CD4-positive, alpha-beta T cell (primary cell): ENCODE measurements at regions of chr7 and their contacts with region 1.

Region 1: GRCh38 chr7:102279537-102280400 is 6.9 kb upstream of the SH2B2 start:
- DNase-seq: peak in 13 of 14 experiments; percentile 37 to 82 (median 51)
- ATAC-seq: peak; percentile 89
- H3K4me3 ChIP-seq: no peak overlapping the region
- H3K4me3 Mint-ChIP-seq: no peak overlapping the region
- H3K27ac ChIP-seq: no peak overlapping the region
- H3K27ac Mint-ChIP-seq: no peak overlapping the region
- H3K4me1 ChIP-seq: peaks cover 14% of the 10 kb centered on the region
- H3K4me1 Mint-ChIP-seq: peaks cover 6% of the 10 kb centered on the region
- H3K27me3 ChIP-seq: no peaks in the 10 kb centered on the region
- H3K27me3 Mint-ChIP-seq: no peaks in the 10 kb centered on the region
- CTCF ChIP-seq: peak; percentile 81

Region 2: GRCh38 chr7:102306875-102307677 is 27.3 kb after region 1 on chr7:
- CTCF ChIA-PET with region 1: no interaction called
- POLR2A ChIA-PET with region 1: no interaction called
- intact Hi-C with region 1: no loop called
- DNase-seq: peak in 4 of 14 experiments; percentile 18 to 64 (median 54)
- ATAC-seq: peak; percentile 44
- H3K4me3 ChIP-seq: peak overlapping the region; percentile 4
- H3K4me3 Mint-ChIP-seq: no peak overlapping the region
- H3K27ac ChIP-seq: no peak overlapping the region
- H3K27ac Mint-ChIP-seq: no peak overlapping the region
- H3K4me1 ChIP-seq: peaks cover 27% of the 10 kb centered on the region
- H3K4me1 Mint-ChIP-seq: no peaks in the 10 kb centered on the region
- H3K27me3 ChIP-seq: no peaks in the 10 kb centered on the region
- H3K27me3 Mint-ChIP-seq: no peaks in the 10 kb centered on the region
- CTCF ChIP-seq: no peak

Region 3: GRCh38 chr7:102456327-102456726 is 176.6 kb after region 1 on chr7:
- CTCF ChIA-PET with region 1: no interaction called
- POLR2A ChIA-PET with region 1: no interaction called
- intact Hi-C with region 1: loop called in 1 of 2 experiments (anchors 5 kb)
- DNase-seq: no peak
- ATAC-seq: no peak
- H3K4me3 ChIP-seq: no peak overlapping the region
- H3K4me3 Mint-ChIP-seq: no peak overlapping the region
- H3K27ac ChIP-seq: no peak overlapping the region
- H3K27ac Mint-ChIP-seq: no peak overlapping the region
- H3K4me1 ChIP-seq: peaks cover 3% of the 10 kb centered on the region
- H3K4me1 Mint-ChIP-seq: no peaks in the 10 kb centered on the region
- H3K27me3 ChIP-seq: no peaks in the 10 kb centered on the region
- H3K27me3 Mint-ChIP-seq: no peaks in the 10 kb centered on the region
- CTCF ChIP-seq: no peak